Activated naive CD4-positive, alpha-beta T cell treated with anti-CD3 and anti-CD28 coated beads, Interleukin-2, amount 10 ng/mL, durations not matched to agents 7 days and 5 days (primary cell): ENCODE measurements at regions of chr7 and their contacts with region 1.

Region 1: GRCh38 chr7:140478246-140479061 is 851 bp downstream of the MKRN1 start:
- DNase-seq: peak; percentile 64
- H3K4me3 Mint-ChIP-seq: peak overlapping the region; percentile 87
- H3K27ac Mint-ChIP-seq: peak overlapping the region; percentile 93
- H3K4me1 Mint-ChIP-seq: peaks cover 38% of the 10 kb centered on the region
- H3K27me3 Mint-ChIP-seq: peaks cover 8% of the 10 kb centered on the region

Region 2: DNA sequence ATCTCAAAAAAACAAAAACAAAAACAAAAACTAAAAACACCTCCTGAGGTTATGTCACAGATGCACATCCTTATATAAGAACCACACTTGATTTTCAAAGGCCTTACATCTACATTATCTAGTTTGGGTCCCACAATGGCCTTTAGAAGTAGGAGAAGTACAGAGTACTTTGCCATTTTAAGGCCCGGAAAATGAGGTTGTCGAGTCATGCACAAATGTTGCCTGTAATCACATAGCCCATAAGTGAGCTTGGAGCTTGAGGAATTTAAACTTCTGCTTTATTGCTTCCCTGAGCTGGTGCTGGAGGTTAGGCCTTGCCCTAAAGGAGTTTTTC is 10.5 kb after region 1 on chr7:
- CTCF ChIA-PET with region 1: interaction called, 32 read pairs
- DNase-seq: no peak
- H3K4me3 Mint-ChIP-seq: no peak overlapping the region
- H3K27ac Mint-ChIP-seq: no peak overlapping the region
- H3K4me1 Mint-ChIP-seq: peaks cover 13% of the 10 kb centered on the region
- H3K27me3 Mint-ChIP-seq: peaks cover 39% of the 10 kb centered on the region

Region 3: GRCh38 chr7:140494867-140495266 is 16.4 kb after region 1 on chr7:
- CTCF ChIA-PET with region 1: interaction called, 32 read pairs
- DNase-seq: no peak
- H3K4me3 Mint-ChIP-seq: no peak overlapping the region
- H3K27ac Mint-ChIP-seq: no peak overlapping the region
- H3K4me1 Mint-ChIP-seq: no peaks in the 10 kb centered on the region
- H3K27me3 Mint-ChIP-seq: peaks cover 22% of the 10 kb centered on the region

Region 4: DNA sequence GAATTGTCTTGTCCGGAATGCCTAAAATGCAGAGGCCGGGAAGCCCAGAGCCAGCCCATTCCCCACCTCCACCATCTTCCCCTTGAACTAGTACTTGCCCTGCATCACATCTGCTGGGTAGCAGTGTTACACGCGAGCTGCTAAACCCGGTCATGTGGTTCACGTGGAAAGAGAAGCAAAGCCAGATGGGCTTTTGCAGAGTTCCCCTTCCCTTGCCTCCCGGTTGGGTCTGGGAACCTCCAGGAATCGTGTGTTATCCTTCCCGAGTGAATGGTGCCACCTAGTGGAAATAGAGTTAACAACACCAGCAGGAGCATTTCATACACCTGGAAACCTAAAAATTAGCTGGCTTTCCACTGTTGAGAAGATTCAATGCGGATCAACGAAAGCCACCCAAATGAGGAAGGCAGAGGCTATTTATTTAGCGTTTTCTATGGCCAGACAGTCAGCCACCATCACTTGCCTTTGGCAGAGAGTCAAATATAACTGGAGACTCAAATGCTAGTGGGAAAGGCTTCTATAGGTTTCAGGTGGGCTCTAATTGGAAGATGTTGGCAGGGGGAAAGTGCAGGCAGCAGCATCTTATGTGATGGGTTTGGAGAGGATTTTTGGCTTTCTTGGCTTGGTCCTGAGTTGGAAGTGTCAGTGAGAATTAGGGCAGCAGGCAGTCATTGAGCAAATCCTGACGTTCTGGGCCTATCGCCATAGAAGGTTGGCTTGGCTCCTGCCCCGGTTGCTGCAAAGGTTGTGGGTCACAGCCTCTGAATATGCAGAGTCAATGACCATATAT is 175.1 kb after region 1 on chr7:
- CTCF ChIA-PET with region 1: interaction called, 10 read pairs
- DNase-seq: peak; percentile 39
- H3K4me3 Mint-ChIP-seq: no peak overlapping the region
- H3K27ac Mint-ChIP-seq: no peak overlapping the region
- H3K4me1 Mint-ChIP-seq: peaks cover 21% of the 10 kb centered on the region
- H3K27me3 Mint-ChIP-seq: peaks cover 39% of the 10 kb centered on the region